ENCODE measurements at regions of chr15 and their contacts with region 1.

Region 1: DNA sequence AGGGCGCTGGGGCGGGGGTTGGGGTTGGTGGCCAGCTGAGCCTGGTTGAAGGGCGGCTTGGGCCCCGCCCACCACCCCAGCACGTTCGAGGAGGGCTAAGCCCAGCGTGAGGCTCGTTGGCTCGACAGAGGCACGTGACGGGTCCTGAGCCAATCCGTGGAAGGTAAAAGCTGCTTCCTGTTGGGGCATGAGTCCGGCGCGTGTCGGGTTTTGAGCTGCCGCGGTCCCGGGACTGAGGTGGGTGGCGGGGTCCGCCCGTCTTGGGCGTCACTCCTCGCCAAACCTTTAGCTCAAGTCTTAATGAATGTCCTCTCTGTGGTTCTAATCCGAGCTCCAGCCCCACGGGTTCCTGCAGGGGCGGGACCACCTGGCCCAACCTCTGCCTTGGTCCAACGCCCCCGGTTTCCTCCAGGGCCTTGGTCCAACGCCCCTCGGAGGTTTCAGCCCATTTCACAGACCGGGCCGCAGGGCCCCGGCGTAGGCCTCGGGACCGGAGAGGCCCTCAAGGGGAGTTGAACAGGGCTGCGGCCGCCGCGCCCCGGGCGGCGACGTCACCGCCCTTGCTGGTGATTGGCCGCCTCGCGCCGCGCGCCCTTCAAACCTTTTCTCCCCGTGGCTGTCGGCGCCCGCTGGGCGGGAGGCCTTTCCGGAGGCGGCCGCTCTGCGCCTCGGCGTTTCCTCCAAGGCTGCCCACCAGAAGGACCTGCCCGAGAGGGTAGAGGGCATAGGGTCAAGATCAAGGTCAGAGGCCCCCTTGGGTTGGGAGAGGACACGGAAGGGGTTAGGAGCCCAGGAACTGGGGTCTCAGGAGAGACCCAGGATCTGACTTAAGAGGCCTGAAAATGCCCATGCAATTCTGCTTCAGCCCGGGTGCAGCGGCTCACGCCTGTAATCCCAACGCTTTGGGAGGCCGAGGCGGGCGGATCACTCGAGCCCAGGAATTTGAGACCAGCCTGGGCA is at the start of gene RCCD1:
- DNase-seq: peak; percentile 67 to 90 (median 85)
- ATAC-seq: peak; percentile 98
- H3K4me3 ChIP-seq: peak within 1 kb of the TSS; percentile 100
- H3K4me3 Mint-ChIP-seq: peak within 1 kb of the TSS; percentile 81 to 90 (median 87)
- H3K27ac ChIP-seq: peak within 1 kb of the TSS; percentile 98
- H3K27ac Mint-ChIP-seq: peak within 1 kb of the TSS; percentile 76 to 96 (median 94)
- H3K4me1 ChIP-seq: peaks cover 10 to 15% of the 10 kb centered on the region in 2 donors
- H3K4me1 Mint-ChIP-seq: peaks cover 6 to 24% (median 12%) of the 10 kb centered on the region in 7 donors
- H3K27me3 ChIP-seq: no peaks in the 10 kb centered on the region
- H3K27me3 Mint-ChIP-seq: no peaks in the 10 kb centered on the region
- total RNA-seq, gene RCCD1: 5.8 to 24.6 (median 16.3) TPM

Region 2: GRCh38 chr15:90994417-90995311 is 39.7 kb after region 1 on chr15 and contains the start of gene PRC1:
- CTCF ChIA-PET with region 1: no interaction called
- POLR2A ChIA-PET with region 1: interaction called, 7 read pairs
- intact Hi-C with region 1: loop called (anchors 1 kb)
- DNase-seq: peak; percentile 95 to 99 (median 95)
- ATAC-seq: peak; percentile 99
- H3K4me3 ChIP-seq: peak within 1 kb of the TSS; percentile 70
- H3K4me3 Mint-ChIP-seq: peak within 1 kb of the TSS; percentile 96 to 99 (median 98)
- H3K27ac ChIP-seq: peak within 1 kb of the TSS; percentile 86
- H3K27ac Mint-ChIP-seq: peak within 1 kb of the TSS; percentile 88 to 100 (median 97)
- H3K4me1 ChIP-seq: peaks cover 9 to 14% of the 10 kb centered on the region in 2 donors
- H3K4me1 Mint-ChIP-seq: peaks cover 3 to 43% (median 16%) of the 10 kb centered on the region in 7 donors
- H3K27me3 ChIP-seq: no peaks in the 10 kb centered on the region
- H3K27me3 Mint-ChIP-seq: no peaks in the 10 kb centered on the region
- total RNA-seq, gene PRC1: 2.6 to 98.9 (median 19.4) TPM

Region 3: DNA sequence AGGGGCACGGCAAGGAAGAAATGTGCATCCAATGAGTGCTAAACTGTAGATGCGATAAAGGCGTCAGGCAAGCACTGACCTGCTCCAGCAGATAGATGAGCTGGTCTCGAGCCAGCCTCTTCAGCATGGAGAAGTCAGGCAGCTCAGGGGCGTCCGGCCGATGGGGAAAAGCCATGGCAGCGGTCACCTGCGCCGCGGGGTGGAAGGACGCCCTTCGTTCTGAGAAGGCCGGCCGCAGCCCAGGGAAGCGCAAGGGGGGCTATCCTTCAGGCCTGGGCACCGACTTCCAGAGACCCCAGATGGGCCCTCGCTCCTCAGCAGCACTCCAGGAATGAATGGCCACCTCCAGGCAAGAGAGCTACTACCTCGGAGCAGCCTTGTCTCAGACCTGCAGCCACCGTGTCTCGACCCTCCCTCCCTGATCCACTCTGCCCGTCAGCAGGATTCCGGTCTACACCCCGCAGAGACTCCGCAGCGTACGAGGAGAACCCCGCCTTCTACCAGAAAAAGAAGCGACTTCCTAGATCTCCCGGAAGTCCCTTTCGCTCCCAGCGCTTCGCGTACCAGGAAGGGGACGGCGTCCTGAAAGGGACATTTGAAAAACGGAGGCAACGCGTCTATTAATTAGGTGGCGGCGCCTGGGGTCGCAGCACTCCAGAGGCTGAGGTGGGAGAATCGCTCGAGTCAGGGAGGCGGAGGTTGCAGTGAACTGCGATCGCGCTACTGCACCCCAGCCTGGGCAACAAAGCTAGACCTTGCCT is 67.3 kb after region 1 on chr15 and contains the start of gene VPS33B:
- CTCF ChIA-PET with region 1: interaction called, 3 read pairs
- POLR2A ChIA-PET with region 1: interaction called, 3 read pairs
- intact Hi-C with region 1: loop called in 1 of 2 experiments (anchors 1 kb)
- DNase-seq: peak; percentile 37 to 78 (median 76)
- ATAC-seq: peak; percentile 91
- H3K4me3 ChIP-seq: peak within 1 kb of the TSS; percentile 100
- H3K4me3 Mint-ChIP-seq: peak within 1 kb of the TSS; percentile 87 to 99 (median 96)
- H3K27ac ChIP-seq: peak within 1 kb of the TSS; percentile 82
- H3K27ac Mint-ChIP-seq: peak within 1 kb of the TSS; percentile 79 to 96 (median 94)
- H3K4me1 ChIP-seq: peaks cover 5 to 15% of the 10 kb centered on the region in 2 donors
- H3K4me1 Mint-ChIP-seq: peaks cover 38 to 56% (median 47%) of the 10 kb centered on the region in 7 donors
- H3K27me3 ChIP-seq: no peaks in the 10 kb centered on the region
- H3K27me3 Mint-ChIP-seq: no peaks in the 10 kb centered on the region
- total RNA-seq, gene VPS33B: 15.8 to 28.1 (median 25.7) TPM

Region 4: DNA sequence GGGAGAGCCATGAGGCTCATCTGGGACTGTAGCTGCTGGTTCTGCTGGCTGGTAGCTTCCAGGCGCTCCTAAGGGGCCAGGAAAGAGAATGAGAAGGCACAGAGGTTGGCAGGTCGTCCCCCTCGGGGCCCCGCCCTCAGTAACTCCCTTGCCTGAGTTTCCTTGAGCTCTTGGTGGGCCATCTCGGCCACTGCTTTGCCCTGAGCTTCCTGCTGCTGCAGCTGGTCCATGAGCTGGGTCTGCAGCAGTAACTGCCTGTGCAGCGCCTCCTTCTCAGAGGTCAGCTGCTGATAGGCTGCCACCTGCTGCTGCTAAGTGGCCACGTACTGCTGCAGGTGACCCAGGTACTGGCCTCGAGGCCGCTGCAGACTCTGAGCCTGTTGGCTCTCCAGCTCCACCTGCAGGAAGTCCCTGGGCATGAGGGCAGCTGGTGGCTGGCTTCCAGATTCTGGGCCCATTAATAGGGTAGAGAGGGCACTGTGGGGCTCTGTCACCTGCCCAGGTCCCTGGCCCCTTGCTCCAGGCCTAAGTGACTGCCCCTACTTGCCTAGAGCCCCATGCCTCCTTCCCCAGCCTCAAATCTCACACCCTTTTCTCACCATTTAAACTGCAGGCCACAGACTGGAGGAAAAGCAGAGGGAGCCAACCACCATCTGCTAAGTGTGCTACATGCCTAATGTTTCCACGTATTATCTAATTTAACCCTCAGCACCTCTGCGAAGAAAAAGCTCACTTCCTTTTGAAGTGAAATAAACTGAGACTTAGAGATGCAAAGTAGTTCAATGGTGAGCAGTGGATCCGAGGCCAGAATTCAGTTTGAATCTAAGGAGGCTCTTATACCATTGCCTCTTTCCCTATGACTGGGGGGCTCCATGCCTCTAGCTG is 78.2 kb after region 1 on chr15:
- CTCF ChIA-PET with region 1: interaction called, 12 read pairs
- POLR2A ChIA-PET with region 1: interaction called, 3 read pairs
- intact Hi-C with region 1: loop called (anchors 1 kb)
- DNase-seq: peak in 8 of 9 donors; percentile 26 to 61 (median 36)
- ATAC-seq: peak; percentile 65
- H3K4me3 ChIP-seq: no peak overlapping the region
- H3K4me3 Mint-ChIP-seq: no peak overlapping the region
- H3K27ac ChIP-seq: no peak overlapping the region
- H3K27ac Mint-ChIP-seq: peak overlapping the region in 1 of 9 donors; percentile 67
- H3K4me1 ChIP-seq: no peaks in the 10 kb centered on the region
- H3K4me1 Mint-ChIP-seq: peaks cover 0 to 12% (median 4%) of the 10 kb centered on the region in 7 donors
- H3K27me3 ChIP-seq: no peaks in the 10 kb centered on the region
- H3K27me3 Mint-ChIP-seq: peaks cover 0 to 20% (median 0%) of the 10 kb centered on the region in 5 donors

Region 5: DNA sequence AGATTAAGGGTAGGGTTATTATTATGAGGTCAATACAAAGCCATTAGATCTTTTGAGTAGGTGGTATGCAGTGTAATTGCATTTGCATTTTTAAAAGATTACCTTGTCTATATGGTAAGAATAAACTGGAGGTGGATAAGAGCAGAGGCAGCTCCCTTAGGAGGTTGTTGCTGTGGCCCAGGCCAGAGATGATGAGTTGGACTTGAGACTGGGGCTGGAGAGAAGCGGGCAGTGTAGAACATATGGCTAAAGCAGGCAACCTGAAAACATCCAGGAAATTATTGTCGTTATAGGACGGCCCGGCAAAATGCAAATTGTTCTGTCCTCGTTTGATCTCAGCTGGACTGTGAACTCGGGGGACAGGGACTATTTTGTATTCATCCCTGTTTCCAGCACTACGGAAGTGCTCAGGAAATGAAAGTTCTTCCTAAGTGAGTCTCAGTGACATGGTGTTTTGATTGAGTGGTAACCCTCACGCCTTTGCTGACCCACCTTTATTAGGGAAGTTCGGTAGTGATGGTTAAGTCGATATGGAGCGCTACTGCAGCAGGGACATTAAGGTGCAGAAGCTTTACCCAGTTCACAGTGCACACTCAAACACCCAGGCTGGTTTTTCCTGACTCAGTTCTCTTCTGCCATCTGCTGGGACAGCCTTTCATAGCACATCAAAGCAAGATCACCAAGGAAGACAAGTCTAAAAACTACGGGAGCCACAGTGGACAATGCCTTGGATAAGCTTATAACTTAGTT is 94.6 kb after region 1 on chr15:
- CTCF ChIA-PET with region 1: interaction called, 13 read pairs
- POLR2A ChIA-PET with region 1: interaction called, 3 read pairs
- intact Hi-C with region 1: loop called (anchors 1 kb)
- DNase-seq: peak; percentile 19 to 62 (median 54)
- ATAC-seq: peak; percentile 92
- H3K4me3 ChIP-seq: no peak overlapping the region
- H3K4me3 Mint-ChIP-seq: peak overlapping the region in 3 of 10 donors; percentile 12 to 48 (median 17)
- H3K27ac ChIP-seq: no peak overlapping the region
- H3K27ac Mint-ChIP-seq: peak overlapping the region in 4 of 9 donors; percentile 17 to 70 (median 20)
- H3K4me1 ChIP-seq: peaks cover 3 to 6% of the 10 kb centered on the region in 2 donors
- H3K4me1 Mint-ChIP-seq: peaks cover 6 to 40% (median 31%) of the 10 kb centered on the region in 7 donors
- H3K27me3 ChIP-seq: no peaks in the 10 kb centered on the region
- H3K27me3 Mint-ChIP-seq: peaks cover 10 to 41% (median 19%) of the 10 kb centered on the region in 5 donors

Region 6: GRCh38 chr15:91261345-91261744 is 306.4 kb after region 1 on chr15:
- CTCF ChIA-PET with region 1: no interaction called
- POLR2A ChIA-PET with region 1: no interaction called
- intact Hi-C with region 1: no loop called
- DNase-seq: no peak
- ATAC-seq: no peak
- H3K4me3 ChIP-seq: no peak overlapping the region
- H3K4me3 Mint-ChIP-seq: no peak overlapping the region
- H3K27ac ChIP-seq: no peak overlapping the region
- H3K27ac Mint-ChIP-seq: no peak overlapping the region
- H3K4me1 ChIP-seq: no peaks in the 10 kb centered on the region
- H3K4me1 Mint-ChIP-seq: peaks cover 0 to 4% (median 0%) of the 10 kb centered on the region in 7 donors
- H3K27me3 ChIP-seq: no peaks in the 10 kb centered on the region
- H3K27me3 Mint-ChIP-seq: peaks cover 6 to 13% (median 6%) of the 10 kb centered on the region in 5 donors

Region 7: GRCh38 chr15:91271565-91272153 is 316.7 kb after region 1 on chr15:
- CTCF ChIA-PET with region 1: interaction called, 3 read pairs
- POLR2A ChIA-PET with region 1: no interaction called
- intact Hi-C with region 1: loop called (anchors 1 kb)
- DNase-seq: peak in 8 of 9 donors; percentile 34 to 65 (median 52)
- ATAC-seq: peak; percentile 79
- H3K4me3 ChIP-seq: no peak overlapping the region
- H3K4me3 Mint-ChIP-seq: peak overlapping the region in 8 of 10 donors; percentile 34 to 67 (median 53)
- H3K27ac ChIP-seq: no peak overlapping the region
- H3K27ac Mint-ChIP-seq: no peak overlapping the region
- H3K4me1 ChIP-seq: no peaks in the 10 kb centered on the region
- H3K4me1 Mint-ChIP-seq: peaks cover 0 to 11% (median 5%) of the 10 kb centered on the region in 7 donors
- H3K27me3 ChIP-seq: no peaks in the 10 kb centered on the region
- H3K27me3 Mint-ChIP-seq: peaks cover 12 to 40% (median 17%) of the 10 kb centered on the region in 5 donors